ENCODE measurements at regions of chr1 and their contacts with region 1.

Region 1: DNA sequence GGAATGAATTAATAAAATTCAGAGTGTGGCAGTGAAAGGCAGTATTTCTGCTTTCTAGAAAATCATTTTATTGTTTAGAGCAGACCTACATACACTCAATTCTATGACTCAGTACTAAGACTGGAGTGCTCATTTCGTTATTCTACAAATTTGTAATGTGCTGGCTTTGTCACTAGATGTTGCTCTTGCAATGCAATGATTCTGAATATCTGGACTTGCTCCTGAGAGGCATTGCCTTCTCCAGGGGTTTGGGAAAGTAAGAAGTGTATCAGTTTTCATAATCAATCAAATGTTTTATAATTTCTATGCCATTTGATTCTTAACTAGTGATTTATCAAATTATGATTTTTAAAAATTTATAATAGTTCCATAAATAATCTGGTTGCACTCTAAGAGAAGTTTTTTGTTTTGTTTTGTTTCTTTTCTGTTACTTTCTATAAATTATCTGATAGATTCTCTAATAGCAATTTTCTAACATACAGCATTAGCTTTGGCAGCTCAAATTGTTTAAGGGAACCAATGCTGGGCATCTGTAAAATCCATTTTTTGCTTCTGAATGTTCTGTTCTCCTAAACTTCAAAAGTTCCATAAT is 280.5 kb upstream of the SGIP1 start:
- DNase-seq: peak in 4 of 5 donors; percentile 45 to 55 (median 50)
- H3K4me3 ChIP-seq: no peak overlapping the region
- H3K4me3 Mint-ChIP-seq: no peak overlapping the region
- H3K27ac ChIP-seq: no peak overlapping the region
- H3K27ac Mint-ChIP-seq: peak overlapping the region in 1 of 7 donors; percentile 57
- H3K4me1 ChIP-seq: peaks cover 26% of the 10 kb centered on the region
- H3K4me1 Mint-ChIP-seq: peaks cover 5 to 24% (median 16%) of the 10 kb centered on the region in 4 donors
- H3K27me3 ChIP-seq: no peaks in the 10 kb centered on the region
- H3K27me3 Mint-ChIP-seq: peaks cover 0 to 2% of the 10 kb centered on the region in 2 donors

Region 2: GRCh38 chr1:65958561-65959350 is 294.7 kb before region 1 on chr1:
- CTCF ChIA-PET with region 1: interaction called, 31 read pairs
- POLR2A ChIA-PET with region 1: no interaction called
- intact Hi-C with region 1: loop called (anchors 1 kb)
- DNase-seq: peak in 4 of 5 donors; percentile 55 to 73 (median 63)
- H3K4me3 ChIP-seq: no peak overlapping the region
- H3K4me3 Mint-ChIP-seq: no peak overlapping the region
- H3K27ac ChIP-seq: no peak overlapping the region
- H3K27ac Mint-ChIP-seq: no peak overlapping the region
- H3K4me1 ChIP-seq: no peaks in the 10 kb centered on the region
- H3K4me1 Mint-ChIP-seq: no peaks in the 10 kb centered on the region
- H3K27me3 ChIP-seq: no peaks in the 10 kb centered on the region
- H3K27me3 Mint-ChIP-seq: peaks cover 2 to 5% of the 10 kb centered on the region in 2 donors

Region 3: DNA sequence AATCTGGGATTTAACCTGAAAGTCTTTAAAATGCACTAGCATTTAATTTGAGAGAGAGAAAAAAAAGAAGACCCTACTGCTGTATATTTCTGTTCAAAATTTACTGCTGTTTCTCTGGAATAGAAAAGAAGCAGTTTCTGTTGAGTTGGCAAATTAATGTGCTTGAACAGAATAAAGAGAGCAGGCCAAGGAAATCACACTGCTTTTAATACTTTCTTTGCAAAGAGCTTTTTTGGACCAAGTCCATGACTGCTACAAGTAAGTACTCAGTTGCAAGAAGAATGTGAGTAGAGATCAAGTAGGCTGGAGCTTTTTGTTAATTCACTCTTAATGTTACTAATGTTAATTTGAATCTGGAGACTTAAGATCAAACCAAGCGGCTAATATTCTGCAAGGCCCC is 55.6 kb before region 1 on chr1:
- CTCF ChIA-PET with region 1: no interaction called
- POLR2A ChIA-PET with region 1: no interaction called
- intact Hi-C with region 1: no loop called
- DNase-seq: no peak
- H3K4me3 ChIP-seq: no peak overlapping the region
- H3K4me3 Mint-ChIP-seq: no peak overlapping the region
- H3K27ac ChIP-seq: no peak overlapping the region
- H3K27ac Mint-ChIP-seq: no peak overlapping the region
- H3K4me1 ChIP-seq: no peaks in the 10 kb centered on the region
- H3K4me1 Mint-ChIP-seq: no peaks in the 10 kb centered on the region
- H3K27me3 ChIP-seq: no peaks in the 10 kb centered on the region
- H3K27me3 Mint-ChIP-seq: peaks cover 1 to 6% of the 10 kb centered on the region in 2 donors

Region 4: DNA sequence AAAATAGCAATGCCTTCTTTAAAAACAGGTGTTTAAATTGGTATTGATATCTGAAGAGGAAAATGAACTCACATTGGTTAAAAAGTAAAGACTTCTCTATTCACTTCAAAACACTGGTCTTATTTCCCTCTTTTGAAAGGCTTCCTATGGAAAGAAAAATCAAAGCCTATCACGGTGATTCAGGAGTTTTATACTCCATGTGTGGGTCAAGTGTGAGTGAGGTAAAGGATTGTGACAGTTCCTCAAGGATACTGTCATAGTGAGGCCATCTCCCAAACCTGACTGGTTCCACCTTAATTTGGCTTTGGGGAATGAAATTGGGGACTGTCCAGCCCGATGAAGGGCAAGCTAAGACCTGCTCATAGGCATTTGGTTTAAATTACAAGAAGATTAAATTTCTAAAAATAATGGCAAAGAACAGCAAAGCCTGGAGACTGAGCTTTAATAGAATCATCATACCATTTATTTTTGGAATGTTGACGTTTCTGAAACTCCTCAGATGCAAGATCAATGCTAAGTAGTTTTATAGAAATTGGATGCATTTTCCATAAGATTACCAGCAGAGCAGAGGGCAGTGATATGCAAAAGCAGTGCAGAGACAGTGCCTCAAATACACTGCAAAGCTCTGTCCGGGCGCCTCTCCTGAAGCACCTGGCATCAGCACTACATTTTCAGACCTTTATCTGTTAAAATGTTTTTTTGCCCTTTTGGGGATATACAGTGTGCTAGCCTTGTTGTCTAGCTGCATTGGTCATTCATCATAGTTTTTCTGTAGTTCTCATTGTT is 21.6 kb before region 1 on chr1:
- CTCF ChIA-PET with region 1: no interaction called
- POLR2A ChIA-PET with region 1: no interaction called
- intact Hi-C with region 1: no loop called
- DNase-seq: no peak
- H3K4me3 ChIP-seq: no peak overlapping the region
- H3K4me3 Mint-ChIP-seq: no peak overlapping the region
- H3K27ac ChIP-seq: no peak overlapping the region
- H3K27ac Mint-ChIP-seq: no peak overlapping the region
- H3K4me1 ChIP-seq: no peaks in the 10 kb centered on the region
- H3K4me1 Mint-ChIP-seq: no peaks in the 10 kb centered on the region
- H3K27me3 ChIP-seq: no peaks in the 10 kb centered on the region
- H3K27me3 Mint-ChIP-seq: peaks cover 3 to 11% of the 10 kb centered on the region in 2 donors

Region 5: GRCh38 chr1:66374561-66375111 is 121.2 kb after region 1 on chr1:
- CTCF ChIA-PET with region 1: interaction called, 16 read pairs
- POLR2A ChIA-PET with region 1: no interaction called
- intact Hi-C with region 1: no loop called
- DNase-seq: peak; percentile 51 to 66 (median 54)
- H3K4me3 ChIP-seq: no peak overlapping the region
- H3K4me3 Mint-ChIP-seq: peak overlapping the region; percentile 47 to 86 (median 68)
- H3K27ac ChIP-seq: peak overlapping the region; percentile 58
- H3K27ac Mint-ChIP-seq: peak overlapping the region; percentile 81 to 99 (median 93)
- H3K4me1 ChIP-seq: peaks cover 69% of the 10 kb centered on the region
- H3K4me1 Mint-ChIP-seq: peaks cover 58 to 72% (median 65%) of the 10 kb centered on the region in 4 donors
- H3K27me3 ChIP-seq: no peaks in the 10 kb centered on the region
- H3K27me3 Mint-ChIP-seq: no peaks in the 10 kb centered on the region

Region 6: DNA sequence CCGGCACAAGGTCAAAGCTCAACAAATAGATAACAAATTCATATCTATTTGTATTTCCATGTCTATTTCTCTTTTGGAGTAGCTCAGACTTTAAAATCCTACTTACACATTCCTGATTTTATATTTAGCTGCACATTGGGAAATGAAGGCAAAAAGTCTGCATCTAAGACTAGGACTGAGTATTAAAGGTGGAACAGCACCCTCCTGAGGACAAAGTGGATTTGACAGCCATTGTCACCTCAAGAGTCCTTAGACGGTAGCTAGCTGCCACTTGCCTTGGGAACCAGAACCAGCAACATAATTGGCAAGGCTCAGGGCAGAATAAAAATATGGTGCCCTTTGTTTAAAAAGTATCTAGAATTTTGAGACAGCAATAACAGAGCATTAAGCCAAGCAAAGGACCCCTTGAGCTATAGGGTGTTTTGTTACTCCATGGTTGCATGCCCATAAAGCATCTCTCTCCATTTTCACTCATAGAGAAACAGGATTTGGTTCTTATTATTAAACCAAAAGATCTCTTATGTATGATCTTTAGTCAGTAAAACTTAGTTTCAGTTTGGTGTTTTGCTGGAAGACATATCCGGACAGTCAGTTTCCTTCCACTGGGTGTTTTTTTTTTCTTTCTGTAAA is 250.5 kb after region 1 on chr1:
- CTCF ChIA-PET with region 1: no interaction called
- POLR2A ChIA-PET with region 1: no interaction called
- intact Hi-C with region 1: loop called (anchors 5 kb)
- DNase-seq: peak in 4 of 5 donors; percentile 2 to 16 (median 6)
- H3K4me3 ChIP-seq: no peak overlapping the region
- H3K4me3 Mint-ChIP-seq: no peak overlapping the region
- H3K27ac ChIP-seq: no peak overlapping the region
- H3K27ac Mint-ChIP-seq: no peak overlapping the region
- H3K4me1 ChIP-seq: no peaks in the 10 kb centered on the region
- H3K4me1 Mint-ChIP-seq: no peaks in the 10 kb centered on the region
- H3K27me3 ChIP-seq: peaks cover 5% of the 10 kb centered on the region
- H3K27me3 Mint-ChIP-seq: peaks cover 8 to 23% of the 10 kb centered on the region in 2 donors

Region 7: GRCh38 chr1:67575861-67576260 is 1322.4 kb after region 1 on chr1:
- CTCF ChIA-PET with region 1: no interaction called
- POLR2A ChIA-PET with region 1: no interaction called
- intact Hi-C with region 1: no loop called
- DNase-seq: no peak
- H3K4me3 ChIP-seq: no peak overlapping the region
- H3K4me3 Mint-ChIP-seq: no peak overlapping the region
- H3K27ac ChIP-seq: no peak overlapping the region
- H3K27ac Mint-ChIP-seq: no peak overlapping the region
- H3K4me1 ChIP-seq: no peaks in the 10 kb centered on the region
- H3K4me1 Mint-ChIP-seq: no peaks in the 10 kb centered on the region
- H3K27me3 ChIP-seq: no peaks in the 10 kb centered on the region
- H3K27me3 Mint-ChIP-seq: peaks cover 0 to 4% of the 10 kb centered on the region in 2 donors